ENCODE measurements at regions of chr5 and their contacts with region 1.

Region 1: GRCh38 chr5:160390787-160391696 is 8.8 kb downstream of the FAM200C start:
- DNase-seq: no peak
- ATAC-seq: no peak
- H3K4me3 Mint-ChIP-seq: no peak overlapping the region
- H3K27ac Mint-ChIP-seq: 0 out of 2 replicates have a peak overlapping the region, but pooled peaks have one; percentile 36
- H3K4me1 Mint-ChIP-seq: no peaks in the 10 kb centered on the region
- H3K27me3 Mint-ChIP-seq: peaks cover 9% of the 10 kb centered on the region
- CTCF ChIP-seq: no peak

Region 2: GRCh38 chr5:160237571-160238093 is 153.4 kb before region 1 on chr5:
- CTCF ChIA-PET with region 1: interaction called, 10 read pairs
- POLR2A ChIA-PET with region 1: no interaction called
- DNase-seq: peak; percentile 56
- ATAC-seq: peak; percentile 89
- H3K4me3 Mint-ChIP-seq: no peak overlapping the region
- H3K27ac Mint-ChIP-seq: peak overlapping the region; percentile 52
- H3K4me1 Mint-ChIP-seq: peaks cover 29% of the 10 kb centered on the region
- H3K27me3 Mint-ChIP-seq: no peaks in the 10 kb centered on the region
- CTCF ChIP-seq: no peak

Region 3: DNA sequence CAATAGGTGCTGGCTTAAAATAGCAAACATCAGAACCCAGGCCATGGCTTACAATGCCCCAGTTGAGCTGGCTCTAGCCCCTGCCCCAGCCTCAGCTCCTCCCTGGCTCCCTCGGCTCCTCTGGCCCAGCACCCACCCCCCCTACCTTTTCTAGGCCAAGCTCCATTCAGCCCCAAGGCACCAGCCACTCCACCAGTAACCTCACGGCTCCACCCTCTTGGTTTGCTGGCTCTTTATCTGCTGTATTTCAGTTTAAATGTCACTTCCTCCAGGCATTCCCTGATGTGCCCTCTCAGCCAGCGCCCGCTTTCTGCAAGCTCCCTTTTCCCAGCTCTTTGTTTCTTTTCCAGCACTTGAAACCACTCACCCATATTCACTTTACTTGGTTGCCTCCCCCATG is 31.2 kb before region 1 on chr5:
- CTCF ChIA-PET with region 1: interaction called, 10 read pairs
- POLR2A ChIA-PET with region 1: no interaction called
- DNase-seq: no peak
- ATAC-seq: peak; percentile 63
- H3K4me3 Mint-ChIP-seq: no peak overlapping the region
- H3K27ac Mint-ChIP-seq: no peak overlapping the region
- H3K4me1 Mint-ChIP-seq: peaks cover 18% of the 10 kb centered on the region
- H3K27me3 Mint-ChIP-seq: no peaks in the 10 kb centered on the region; the same call in 1 of the 2 replicates
- CTCF ChIP-seq: no peak

Region 4: DNA sequence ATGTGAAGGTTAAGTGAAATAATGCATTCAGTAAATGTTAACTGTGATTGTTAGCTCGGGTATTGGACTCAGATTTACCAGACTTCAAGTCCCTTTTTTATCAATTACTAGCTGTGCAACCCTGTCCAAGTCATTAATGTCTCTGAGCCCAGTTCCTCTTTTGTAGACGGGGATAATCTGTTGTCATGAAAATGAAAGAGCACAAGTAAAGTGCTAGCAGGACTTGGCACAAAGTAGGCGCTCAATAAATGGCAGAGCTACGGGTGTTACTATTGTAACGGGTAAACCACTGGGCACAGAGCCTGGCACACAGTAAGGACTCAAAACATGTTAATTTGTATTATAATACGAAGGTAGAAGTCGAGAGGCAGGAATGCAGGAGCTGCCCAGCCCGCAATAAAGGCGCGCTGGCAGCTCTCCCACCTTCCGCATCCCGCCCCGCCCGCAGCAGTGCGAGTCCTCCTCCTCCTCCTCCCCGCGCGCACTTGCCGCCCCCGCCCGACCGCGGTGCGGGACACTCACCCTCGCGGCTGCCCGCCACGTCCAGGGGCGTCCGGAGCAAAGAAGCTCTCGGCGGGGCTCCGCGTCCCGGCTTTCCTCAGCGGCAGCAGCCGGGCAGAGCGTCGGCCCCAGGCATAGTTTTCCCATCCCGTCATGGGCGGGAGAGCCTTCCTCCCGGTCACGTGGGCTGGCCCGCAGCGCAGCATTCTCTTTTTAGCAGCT is 20.9 kb before region 1 on chr5 and contains the start of gene C1QTNF2:
- CTCF ChIA-PET with region 1: interaction called, 12 read pairs
- POLR2A ChIA-PET with region 1: interaction called, 8 read pairs
- DNase-seq: peak; percentile 64
- ATAC-seq: peak; percentile 86
- H3K4me3 Mint-ChIP-seq: peak within 1 kb of the TSS; percentile 68
- H3K27ac Mint-ChIP-seq: no peak within 1 kb of the TSS
- H3K4me1 Mint-ChIP-seq: peaks cover 11% of the 10 kb centered on the region
- H3K27me3 Mint-ChIP-seq: peaks cover 54% of the 10 kb centered on the region
- CTCF ChIP-seq: no peak
- total RNA-seq, gene C1QTNF2: 0.25 to 0.52 TPM (median 0.44 TPM) in 3 replicates

Region 5: DNA sequence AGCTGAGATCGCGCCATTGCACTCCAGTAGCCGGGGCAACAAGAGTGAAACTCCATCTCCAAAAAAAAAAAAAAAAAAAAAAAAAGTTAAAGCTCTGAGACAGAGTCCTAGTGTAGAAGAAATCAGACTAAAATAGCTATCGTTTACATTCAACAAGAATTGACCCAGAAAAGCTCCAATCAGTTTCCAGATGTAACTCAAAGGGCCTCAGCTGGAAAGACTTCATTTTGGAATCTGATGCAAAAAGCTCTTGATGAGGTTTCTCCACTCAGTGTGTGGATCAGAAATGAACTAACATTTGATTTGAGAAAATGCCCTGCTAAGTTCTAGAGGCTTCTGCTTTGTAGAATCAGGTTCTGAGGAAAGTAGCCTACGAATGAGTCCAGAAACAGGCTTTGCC is 13.4 kb before region 1 on chr5:
- CTCF ChIA-PET with region 1: interaction called, 10 read pairs
- POLR2A ChIA-PET with region 1: interaction called, 6 read pairs
- DNase-seq: no peak
- ATAC-seq: no peak
- H3K4me3 Mint-ChIP-seq: no peak overlapping the region
- H3K27ac Mint-ChIP-seq: no peak overlapping the region
- H3K4me1 Mint-ChIP-seq: peaks cover 8% of the 10 kb centered on the region
- H3K27me3 Mint-ChIP-seq: peaks cover 8% of the 10 kb centered on the region; the same call in 1 of the 2 replicates
- CTCF ChIP-seq: no peak

Measured in WTC11 (cell line).